Activated T-helper 1 cell treated with anti-CD3 and anti-CD28 coated beads, Interleukin-12 subunit alpha, Interleukin-12 subunit beta, Interleukin-2, Interleukin-4 antibody, amounts not matched to agents 30 ng/mL and 10 ng/mL and 1 ng/mL, durations not matched to agents 14 hours and 24 hours and 36 hours (primary cell): ENCODE measurements at regions of chr2 and their contacts with region 1.

Region 1: GRCh38 chr2:176508984-176509740 is 239.9 kb downstream of the MTX2 start:
- DNase-seq: no peak
- H3K4me3 Mint-ChIP-seq: no peak overlapping the region
- H3K27ac Mint-ChIP-seq: no peak overlapping the region
- H3K4me1 Mint-ChIP-seq: peaks cover 5% of the 10 kb centered on the region
- H3K27me3 Mint-ChIP-seq: peaks cover 8% of the 10 kb centered on the region

Region 2: DNA sequence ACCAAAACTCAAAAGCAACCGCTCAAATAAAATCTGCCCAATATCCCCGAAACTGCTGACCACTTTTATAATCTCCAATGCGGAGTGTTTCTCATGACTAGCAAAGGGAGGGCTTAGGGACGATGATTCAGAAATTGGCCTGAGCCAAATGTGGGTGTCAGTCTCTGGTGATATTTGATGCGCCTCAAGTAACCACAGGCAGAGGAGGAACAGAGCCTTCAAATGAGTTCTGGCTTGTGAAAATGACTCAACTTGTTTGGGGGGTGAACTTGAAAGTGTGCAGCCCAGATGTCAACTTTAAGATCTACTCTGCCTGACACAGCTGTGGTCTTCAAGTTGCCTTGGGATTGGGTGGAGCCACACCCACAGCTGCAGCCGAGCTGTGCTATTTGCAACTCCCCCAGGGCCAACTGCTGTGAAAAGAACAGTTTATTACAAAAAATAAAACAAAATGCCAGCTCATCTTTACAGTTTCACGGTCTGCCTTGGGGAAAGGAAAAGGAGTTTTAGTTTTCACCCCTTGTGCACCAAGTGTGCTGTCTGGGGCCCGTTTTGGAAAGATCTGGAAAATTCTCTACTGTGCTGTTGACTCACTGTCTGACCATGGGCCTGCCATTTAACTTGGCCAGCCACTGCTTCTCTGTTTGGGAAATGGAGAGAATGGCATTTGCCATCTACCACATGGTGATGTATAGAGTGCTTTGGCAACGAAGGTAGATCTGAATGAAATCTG is 17.8 kb before region 1 on chr2:
- intact Hi-C with region 1: loop called (anchors 1 kb)
- DNase-seq: no peak
- H3K4me3 Mint-ChIP-seq: no peak overlapping the region
- H3K27ac Mint-ChIP-seq: no peak overlapping the region
- H3K4me1 Mint-ChIP-seq: peaks cover 16% of the 10 kb centered on the region
- H3K27me3 Mint-ChIP-seq: peaks cover 22% of the 10 kb centered on the region

Region 3: GRCh38 chr2:176582990-176583481 is 73.9 kb after region 1 on chr2:
- intact Hi-C with region 1: loop called (anchors 1 kb)
- DNase-seq: no peak
- H3K4me3 Mint-ChIP-seq: no peak overlapping the region
- H3K27ac Mint-ChIP-seq: no peak overlapping the region
- H3K4me1 Mint-ChIP-seq: peaks cover 9% of the 10 kb centered on the region
- H3K27me3 Mint-ChIP-seq: peaks cover 14% of the 10 kb centered on the region